ENCODE measurements at regions of chr9 and their contacts with region 1.

Region 1: DNA sequence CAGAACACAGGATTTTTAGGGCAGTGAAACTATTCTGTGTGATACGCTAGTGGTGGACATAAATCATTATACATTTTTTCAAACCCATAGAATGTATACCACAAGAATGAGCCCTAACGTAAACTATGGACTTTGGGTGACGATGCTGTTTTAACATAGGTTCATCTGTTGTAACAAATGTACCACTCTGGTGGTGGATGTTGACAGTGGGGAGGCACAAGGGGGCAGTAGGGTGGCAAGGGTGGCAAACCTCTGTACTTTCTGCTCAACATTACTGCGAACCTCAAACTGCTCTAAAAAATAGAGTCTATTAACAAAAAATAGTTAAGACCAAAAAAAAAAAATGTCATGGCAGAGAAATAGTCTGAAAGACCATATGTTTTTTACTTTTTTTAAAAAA is 9.1 kb upstream of the MVB12B start:
- DNase-seq: no peak
- ATAC-seq: peak in 1 of 4 donors; percentile 72
- H3K4me3 ChIP-seq: no peak overlapping the region
- H3K27ac ChIP-seq: no peak overlapping the region
- H3K4me1 ChIP-seq: peaks cover 0 to 4% (median 0%) of the 10 kb centered on the region in 12 donors
- H3K27me3 ChIP-seq: no peaks in the 10 kb centered on the region
- CTCF ChIP-seq: peak in 10 of 12 donors; percentile 17 to 49 (median 39)
- POLR2A ChIP-seq: no peak

Region 2: DNA sequence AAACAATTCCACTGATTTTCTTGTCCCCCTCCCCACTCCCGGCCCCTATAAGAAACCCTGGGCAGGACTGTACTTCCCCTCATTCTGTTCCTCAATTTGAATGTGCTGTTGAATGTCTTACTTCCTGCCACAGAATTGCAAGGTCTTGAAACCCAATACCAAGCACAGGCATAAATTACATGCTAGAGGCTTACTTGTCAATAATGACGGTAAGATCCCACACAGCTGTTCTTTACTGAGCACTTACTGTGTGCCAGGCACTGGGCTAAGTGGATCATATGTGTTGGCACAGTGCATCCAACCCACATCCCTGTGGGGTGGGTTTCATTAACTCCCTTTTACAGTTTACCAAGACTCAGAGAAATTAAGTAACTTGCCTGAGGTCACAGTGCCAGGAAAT is 72.5 kb after region 1 on chr9:
- intact Hi-C with region 1: loop called in 7 of 10 experiments (anchors 5 kb)
- DNase-seq: no peak
- ATAC-seq: peak in 3 of 4 donors; percentile 45 to 56 (median 52)
- H3K4me3 ChIP-seq: no peak overlapping the region
- H3K27ac ChIP-seq: peak overlapping the region in 2 of 12 donors; percentile 25 to 89
- H3K4me1 ChIP-seq: peaks cover 0 to 49% (median 20%) of the 10 kb centered on the region in 12 donors
- H3K27me3 ChIP-seq: no peaks in the 10 kb centered on the region
- CTCF ChIP-seq: no peak
- POLR2A ChIP-seq: no peak

Region 3: DNA sequence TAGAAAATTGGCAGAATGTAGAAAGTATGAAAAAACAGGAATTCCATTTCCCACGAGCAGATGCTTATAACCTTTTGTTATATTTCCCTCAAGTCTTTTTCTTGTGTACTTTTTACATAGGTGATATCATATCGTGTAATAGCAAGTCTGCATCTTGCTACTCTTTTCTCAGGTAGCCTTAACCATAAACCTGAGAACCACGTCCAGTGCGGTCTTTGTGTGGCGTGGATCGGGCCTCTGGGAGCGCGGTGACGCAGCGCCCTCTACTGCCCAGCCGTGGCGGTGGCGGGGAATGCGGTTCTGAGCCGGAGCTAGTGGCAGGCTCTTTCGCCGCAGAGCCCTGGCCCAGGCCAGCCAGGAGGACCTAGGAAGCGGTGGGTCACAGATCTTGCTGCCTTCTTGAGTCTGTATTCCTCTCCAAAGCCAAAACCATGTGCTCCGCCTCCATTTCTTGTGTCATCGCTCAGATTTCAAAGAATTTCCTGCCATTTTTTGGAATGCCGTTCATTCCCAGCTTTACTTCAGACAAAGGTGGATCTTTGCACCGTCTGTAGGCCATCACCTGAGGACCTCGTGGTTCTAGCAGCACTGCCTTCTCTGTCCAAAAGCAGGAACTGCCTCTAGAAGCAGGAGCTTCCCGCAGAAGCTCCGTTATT is 81.0 kb after region 1 on chr9:
- intact Hi-C with region 1: loop called in 8 of 10 experiments (anchors 2 to 5 kb)
- DNase-seq: peak; percentile 70 to 91 (median 83)
- ATAC-seq: peak; percentile 79 to 92 (median 88)
- H3K4me3 ChIP-seq: no peak overlapping the region
- H3K27ac ChIP-seq: no peak overlapping the region
- H3K4me1 ChIP-seq: peaks cover 0 to 24% (median 4%) of the 10 kb centered on the region in 12 donors
- H3K27me3 ChIP-seq: no peaks in the 10 kb centered on the region
- CTCF ChIP-seq: peak in 11 of 12 donors; percentile 95 to 99 (median 97)
- POLR2A ChIP-seq: no peak